GM10248 (cell line): ENCODE measurements at regions of chr2 and their contacts with region 1.

Region 1: DNA sequence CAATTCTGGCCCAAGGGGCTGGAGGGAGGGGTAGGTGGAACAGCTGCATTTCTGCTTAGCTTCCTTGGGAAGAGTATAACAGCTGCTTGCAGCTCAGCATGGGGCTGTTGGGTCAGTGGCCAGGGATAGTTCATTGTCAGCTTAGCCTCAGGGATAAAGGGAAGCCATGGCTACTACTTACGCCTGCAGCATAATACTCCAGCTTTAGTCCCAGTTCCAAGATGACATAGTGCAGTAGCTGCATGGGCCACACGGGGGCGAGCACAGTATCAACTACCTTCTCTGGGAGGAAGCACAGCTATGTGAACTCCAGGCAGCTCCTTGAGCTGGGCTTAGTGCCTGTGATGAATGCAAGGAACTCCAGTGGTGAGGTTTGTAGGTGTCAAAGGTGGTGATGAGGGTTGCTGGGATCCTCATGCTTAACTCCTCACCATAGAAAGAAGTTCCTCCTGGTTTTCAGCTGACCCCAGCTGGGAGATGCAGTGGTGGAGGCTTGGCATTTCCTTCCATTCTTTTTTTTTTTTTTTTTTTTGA is 35.4 kb upstream of the RHOB start:
- DNase-seq: peak; percentile 82
- CTCF ChIP-seq: peak; percentile 86

Region 2: GRCh38 chr2:20398956-20399567 is 12.4 kb before region 1 on chr2:
- CTCF ChIA-PET with region 1: interaction called, 42 read pairs
- POLR2A ChIA-PET with region 1: no interaction called
- DNase-seq: no peak
- CTCF ChIP-seq: no peak

Region 3: DNA sequence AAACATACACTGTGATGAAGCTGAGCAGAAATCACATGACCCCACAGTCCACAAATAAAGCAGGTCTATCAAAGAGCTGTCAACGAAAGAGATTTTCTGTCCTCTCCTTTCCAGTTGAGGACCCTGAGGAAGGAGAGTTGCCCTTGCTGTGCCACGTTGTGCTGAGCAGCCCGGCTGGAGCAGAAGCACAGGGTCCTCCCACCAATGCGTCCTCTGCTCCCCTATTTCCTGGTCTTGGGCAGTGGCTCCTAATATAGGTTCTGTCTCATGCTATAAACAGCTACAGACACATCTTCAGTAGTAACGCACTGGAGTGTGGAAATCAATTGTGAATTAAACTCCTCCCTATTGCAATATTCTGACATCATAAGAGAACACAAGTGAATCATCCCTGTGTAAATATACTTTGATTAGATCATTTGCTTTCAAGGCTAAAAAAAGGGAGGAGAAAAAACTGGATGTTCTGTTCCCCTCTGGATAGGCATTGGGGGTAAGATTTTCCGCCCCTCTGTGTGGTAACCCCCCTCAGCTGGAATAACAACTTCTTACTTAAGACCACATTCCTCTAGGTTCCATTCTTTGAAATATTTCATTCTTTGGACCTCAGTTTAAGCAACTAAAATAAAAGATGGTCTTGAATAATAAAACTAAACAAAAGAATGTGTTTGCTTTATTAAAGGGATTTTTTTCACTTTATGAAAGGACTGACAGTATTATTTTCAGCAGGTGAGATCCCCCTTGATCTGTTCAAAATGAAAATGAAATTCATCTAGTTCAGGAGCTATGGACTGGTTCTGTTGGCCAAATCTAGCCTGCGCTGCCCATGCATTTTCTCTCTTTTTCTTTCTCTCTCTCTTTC is 27.1 kb after region 1 on chr2:
- CTCF ChIA-PET with region 1: interaction called, 45 read pairs
- POLR2A ChIA-PET with region 1: no interaction called
- DNase-seq: no peak
- CTCF ChIP-seq: no peak

Region 4: DNA sequence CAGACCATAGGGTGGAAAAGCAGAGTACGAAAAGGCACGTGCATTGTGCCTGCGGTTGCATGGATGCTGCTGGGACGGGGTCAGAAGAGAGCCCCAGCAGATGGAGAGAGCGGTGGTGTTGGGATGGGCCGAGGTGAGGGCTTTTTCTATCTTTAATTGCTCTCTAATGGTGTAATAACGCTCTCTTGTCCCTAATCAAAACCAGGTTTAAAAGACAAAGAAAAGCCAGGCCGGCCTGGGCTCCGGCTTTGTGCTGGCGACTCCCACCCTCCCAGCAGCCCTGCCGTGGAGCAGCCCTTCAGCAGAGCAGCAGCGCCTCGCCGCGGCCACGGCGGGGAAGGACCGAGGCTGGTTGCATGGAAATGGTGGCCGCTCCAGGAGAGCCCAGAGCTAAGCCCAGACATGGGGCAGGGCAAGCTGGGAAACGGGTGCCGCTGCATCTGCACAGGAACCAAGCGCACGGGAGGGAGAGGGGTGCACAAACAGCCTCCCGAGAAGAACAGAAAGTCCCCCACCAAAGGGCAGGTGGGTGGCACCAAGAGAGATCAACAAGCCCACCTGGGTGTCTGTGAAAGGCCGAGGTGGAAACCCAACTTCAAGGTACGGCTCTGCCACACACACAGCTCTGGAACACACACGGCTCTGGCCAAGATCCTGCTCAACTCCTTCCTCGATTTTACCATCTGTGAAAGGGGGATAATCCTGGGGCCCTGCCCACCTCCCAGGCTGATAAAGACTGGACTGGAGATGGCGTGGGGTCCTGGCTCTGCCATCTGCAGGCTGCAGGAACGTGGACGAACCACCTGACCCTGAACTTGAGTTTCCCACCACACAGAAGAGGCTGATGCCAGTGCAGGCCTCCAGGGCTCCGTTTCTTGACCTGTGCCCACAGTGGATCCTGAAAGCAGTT is 224.5 kb after region 1 on chr2:
- CTCF ChIA-PET with region 1: interaction called, 92 read pairs
- POLR2A ChIA-PET with region 1: no interaction called
- DNase-seq: peak; percentile 83
- CTCF ChIP-seq: peak; percentile 95

Region 5: GRCh38 chr2:20661067-20661980 is 249.9 kb after region 1 on chr2:
- CTCF ChIA-PET with region 1: interaction called, 14 read pairs
- POLR2A ChIA-PET with region 1: no interaction called
- DNase-seq: peak; percentile 80
- CTCF ChIP-seq: peak; percentile 94